ENCODE measurements at regions of chr3 and their contacts with region 1.

Region 1: DNA sequence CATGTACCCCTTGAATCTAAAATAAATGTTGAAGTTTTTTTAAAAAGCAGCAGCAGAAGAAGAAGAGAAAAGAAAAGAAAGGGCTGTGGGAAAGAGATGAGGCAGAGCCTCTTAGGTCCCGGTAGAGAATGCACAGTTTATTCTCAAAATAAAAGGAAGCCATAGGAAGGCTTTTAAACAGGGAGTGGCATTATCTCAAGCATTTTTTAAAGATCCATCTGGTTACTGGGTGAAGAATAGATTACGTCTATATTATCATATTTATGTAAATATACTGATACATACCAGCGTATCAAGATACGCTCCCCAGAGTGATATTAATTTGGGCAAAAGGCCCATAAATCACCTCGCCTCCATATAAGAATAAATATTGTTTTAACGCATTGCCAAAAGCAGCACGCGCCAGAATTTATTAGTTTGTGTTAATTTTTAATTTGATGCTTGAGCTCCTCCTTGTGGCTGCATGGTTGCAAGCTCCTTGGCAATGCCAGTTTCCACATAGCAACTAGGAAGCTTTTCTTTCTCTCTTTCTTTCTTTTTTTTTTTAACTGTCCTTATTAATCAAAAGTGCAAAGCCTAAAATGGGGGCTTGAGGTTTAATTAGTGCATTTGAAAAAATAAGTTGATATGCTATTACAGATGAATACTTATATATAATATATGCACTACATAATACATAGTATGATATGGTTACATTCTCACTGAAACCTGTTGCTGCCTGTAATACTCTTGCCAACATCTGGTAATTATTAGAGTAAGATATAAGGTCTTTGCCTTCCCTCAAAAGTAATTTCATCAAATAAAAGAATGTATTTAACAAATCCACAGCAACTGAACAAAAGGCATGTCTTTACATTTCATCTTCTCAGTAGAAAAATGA is 242.8 kb upstream of the UBE2E2 start:
- DNase-seq: peak; percentile 27 to 49
- ATAC-seq: peak in 1 of 2 experiments; percentile 73; a peak in 3 of 6 replicates
- H3K4me3 ChIP-seq: no peak overlapping the region
- H3K27ac ChIP-seq: no peak overlapping the region
- H3K4me1 ChIP-seq: no peaks in the 10 kb centered on the region
- CTCF ChIP-seq: peak; percentile 88
- EP300 ChIP-seq: no peak
- POLR2A ChIP-seq: no peak
- RAD21 ChIP-seq: peak; percentile 82

Region 2: DNA sequence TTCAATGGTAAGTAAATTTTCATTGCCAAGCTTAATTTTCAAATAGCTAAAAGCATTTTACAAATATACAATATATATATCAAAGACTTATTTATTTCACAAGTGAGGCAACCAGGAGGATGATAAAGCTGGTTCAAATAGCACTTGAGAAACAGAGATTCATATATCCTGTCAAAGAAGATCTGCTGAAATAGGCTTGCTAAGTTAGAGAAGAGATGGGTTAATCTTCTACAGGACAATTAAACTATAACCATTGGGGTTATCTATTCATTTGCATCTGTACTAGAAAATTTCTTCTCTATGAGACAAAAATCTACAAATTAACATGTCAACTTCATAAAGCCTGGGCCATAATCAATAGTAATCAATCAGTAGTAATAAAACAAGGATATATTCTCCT is 395.0 kb before region 1 on chr3:
- CTCF ChIA-PET with region 1: interaction called, 10 read pairs
- POLR2A ChIA-PET with region 1: no interaction called
- DNase-seq: no peak
- ATAC-seq: no peak
- H3K4me3 ChIP-seq: no peak overlapping the region
- H3K27ac ChIP-seq: no peak overlapping the region
- H3K4me1 ChIP-seq: no peaks in the 10 kb centered on the region
- CTCF ChIP-seq: no peak
- EP300 ChIP-seq: no peak
- POLR2A ChIP-seq: no peak
- RAD21 ChIP-seq: no peak

Region 3: GRCh38 chr3:22920006-22920405 is 40.3 kb before region 1 on chr3:
- CTCF ChIA-PET with region 1: no interaction called
- POLR2A ChIA-PET with region 1: no interaction called
- DNase-seq: no peak
- ATAC-seq: no peak
- H3K4me3 ChIP-seq: no peak overlapping the region
- H3K27ac ChIP-seq: no peak overlapping the region
- H3K4me1 ChIP-seq: no peaks in the 10 kb centered on the region
- CTCF ChIP-seq: no peak
- EP300 ChIP-seq: no peak
- POLR2A ChIP-seq: no peak
- RAD21 ChIP-seq: no peak

Region 4: GRCh38 chr3:22947851-22948250 is 12.5 kb before region 1 on chr3:
- CTCF ChIA-PET with region 1: interaction called, 11 read pairs
- POLR2A ChIA-PET with region 1: no interaction called
- DNase-seq: no peak
- ATAC-seq: no peak
- H3K4me3 ChIP-seq: no peak overlapping the region
- H3K27ac ChIP-seq: no peak overlapping the region
- H3K4me1 ChIP-seq: no peaks in the 10 kb centered on the region
- CTCF ChIP-seq: no peak
- EP300 ChIP-seq: no peak
- POLR2A ChIP-seq: no peak
- RAD21 ChIP-seq: no peak

Measured in A549 (cell line).